Right ventricle myocardium inferior (tissue), 1 donor: ENCODE measurements at regions of chr19 and their contacts with region 1.

Region 1: DNA sequence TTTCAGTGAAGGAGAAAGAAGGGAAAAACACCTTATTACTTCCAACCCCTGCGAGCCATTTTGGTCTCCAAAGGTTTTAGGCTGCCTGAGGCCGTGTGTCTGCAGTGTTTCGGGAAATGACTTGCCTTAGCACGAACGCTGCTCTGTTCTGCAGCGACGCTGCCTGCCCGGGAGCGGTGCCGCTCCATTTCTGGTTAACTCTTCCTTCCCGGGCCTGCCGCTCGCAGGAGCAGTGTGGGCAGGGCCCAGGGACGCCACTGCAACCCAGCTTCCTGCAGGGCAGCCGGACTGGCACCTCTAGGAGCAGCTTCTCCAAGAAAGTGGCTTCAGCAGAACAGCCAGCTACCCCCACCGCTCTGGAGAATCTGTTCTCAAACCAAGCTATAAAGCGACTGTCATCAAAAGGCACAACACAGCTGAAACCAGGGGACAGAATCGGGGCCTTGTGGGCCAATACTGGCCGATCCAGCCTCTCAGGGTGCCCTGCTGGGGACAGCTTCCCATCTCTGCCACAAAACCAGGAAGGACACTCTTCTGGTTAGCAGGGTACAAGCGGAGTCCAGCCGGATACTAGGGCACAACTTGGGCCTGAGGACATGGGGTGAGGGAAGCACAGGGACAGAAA is 72.2 kb downstream of the KCTD15 start:
- DNase-seq: no peak
- ATAC-seq: peak; percentile 86

Region 2: GRCh38 chr19:33778089-33778791 is 90.7 kb before region 1 on chr19:
- intact Hi-C with region 1: no loop called
- DNase-seq: peak; percentile 94
- ATAC-seq: peak; percentile 90

Region 3: DNA sequence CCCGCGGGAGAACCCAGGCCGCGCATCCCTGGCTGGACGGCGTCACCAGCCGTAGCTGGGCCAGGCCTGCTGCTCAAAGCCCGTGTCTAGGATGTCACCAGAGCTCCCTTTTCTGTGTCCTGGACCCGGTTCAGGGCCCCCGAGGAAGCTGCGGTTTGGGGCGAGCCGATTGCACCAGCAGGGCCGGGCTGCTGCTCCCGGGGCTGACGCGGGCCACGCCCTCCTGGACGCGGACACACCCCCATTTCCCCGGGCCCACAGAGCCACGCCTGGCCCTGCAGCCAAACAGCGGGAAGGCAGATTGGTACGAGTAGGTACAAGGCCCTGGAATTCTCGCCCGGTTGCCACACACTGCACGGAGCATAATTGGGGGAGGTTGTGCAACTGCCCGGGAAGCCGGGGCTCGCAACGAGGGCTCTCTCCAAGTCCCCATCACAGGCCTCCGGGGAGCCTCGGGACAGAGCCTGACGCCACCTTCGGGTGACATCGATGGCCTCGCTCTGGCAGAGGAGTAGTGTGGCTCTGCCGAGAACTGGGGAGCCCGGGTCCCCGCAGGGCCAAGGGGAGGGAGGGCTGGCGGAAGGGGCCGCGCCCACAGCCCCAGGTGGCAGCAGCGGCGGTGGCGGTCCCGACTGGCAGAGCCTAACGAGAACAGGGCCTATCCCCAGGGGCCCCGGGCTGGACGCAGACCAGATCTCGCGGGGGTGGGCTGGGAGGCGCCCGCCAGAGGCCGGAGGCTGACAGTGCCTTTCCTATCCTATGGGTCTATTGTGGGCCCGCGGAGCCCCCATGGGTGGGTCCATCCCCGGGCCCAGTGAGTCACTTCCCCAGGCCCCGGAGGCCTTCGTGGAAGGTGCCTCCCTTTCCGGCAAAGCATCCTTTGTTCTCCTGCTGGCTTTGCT is 48.8 kb before region 1 on chr19:
- intact Hi-C with region 1: loop called (anchors 5 kb)
- DNase-seq: peak; percentile 93
- ATAC-seq: peak; percentile 88